ENCODE measurements at regions of chr12 and their contacts with region 1.

Region 1: DNA sequence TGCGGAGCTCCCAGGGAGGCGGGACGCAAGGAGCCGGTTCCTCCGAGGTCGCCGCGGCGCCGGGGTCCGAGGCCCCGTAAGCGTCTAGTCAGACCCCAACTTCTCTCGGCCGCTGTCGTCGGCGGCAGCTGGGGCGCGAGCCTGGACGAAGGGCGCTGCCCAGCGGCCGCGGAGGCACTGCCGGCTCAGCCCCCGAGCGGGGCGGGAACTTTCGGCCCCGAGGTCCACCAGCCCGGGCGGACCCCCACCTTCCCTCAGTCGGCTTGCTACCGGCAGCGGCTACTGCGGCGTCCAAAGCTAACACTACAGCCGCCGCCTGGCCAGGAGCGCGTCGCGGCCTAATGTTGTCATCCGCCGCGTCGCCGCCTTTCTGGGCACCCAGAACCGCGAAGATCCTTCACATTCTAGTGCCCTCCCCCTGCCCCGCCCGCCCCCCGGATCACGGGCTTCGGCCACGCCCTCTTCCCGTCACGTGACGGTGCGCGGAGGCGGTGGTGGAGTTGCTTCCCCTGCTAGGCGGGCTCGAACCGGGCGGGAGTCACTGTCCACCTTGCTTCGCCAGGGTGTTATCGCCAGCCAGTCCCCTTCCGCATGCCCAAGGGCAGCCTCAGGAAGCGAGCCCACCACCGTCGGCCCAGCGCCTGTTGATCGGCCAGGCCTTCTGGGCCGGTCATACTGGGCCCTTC is at the start of gene OSBPL8:
- DNase-seq: peak; percentile 91
- H3K4me3 Mint-ChIP-seq: peak within 1 kb of the TSS; percentile 94
- H3K27ac Mint-ChIP-seq: peak within 1 kb of the TSS; percentile 98
- H3K4me1 Mint-ChIP-seq: peaks cover 49% of the 10 kb centered on the region
- H3K27me3 Mint-ChIP-seq: no peaks in the 10 kb centered on the region
- total RNA-seq, gene OSBPL8: 86.9 and 95.9 TPM in 2 replicates

Region 2: DNA sequence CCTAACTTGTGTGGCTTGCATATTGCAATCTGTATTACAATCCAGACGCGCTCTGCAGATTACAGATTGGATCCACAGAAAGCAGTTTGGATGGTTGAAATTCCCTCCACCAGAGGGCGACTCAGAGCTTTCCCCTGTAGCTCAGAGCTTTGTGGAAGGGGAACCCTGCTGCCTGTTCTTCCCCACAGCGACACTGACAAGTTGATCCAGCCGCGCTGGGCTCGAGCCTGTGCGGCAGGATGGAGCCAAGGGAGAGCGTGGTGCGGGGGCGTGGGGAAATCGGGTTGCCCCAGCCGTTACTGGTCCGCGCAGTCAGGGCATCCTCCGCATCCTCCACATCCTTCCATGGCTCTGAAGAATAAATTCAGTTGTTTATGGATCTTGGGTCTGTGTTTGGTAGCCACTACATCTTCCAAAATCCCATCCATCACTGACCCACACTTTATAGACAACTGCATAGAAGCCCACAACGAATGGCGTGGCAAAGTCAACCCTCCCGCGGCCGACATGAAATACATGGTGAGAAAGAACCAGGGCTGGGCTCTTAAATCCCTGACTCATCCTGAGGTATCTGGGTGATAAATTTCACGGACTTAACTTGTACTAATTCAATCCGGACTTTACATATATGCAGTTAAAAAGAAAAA is 1225.0 kb before region 1 on chr12 and contains the start of gene GLIPR1L1:
- intact Hi-C with region 1: loop called (anchors 10 kb)
- DNase-seq: peak; percentile 67
- H3K4me3 Mint-ChIP-seq: peak within 1 kb of the TSS; percentile 70
- H3K27ac Mint-ChIP-seq: no peak within 1 kb of the TSS
- H3K4me1 Mint-ChIP-seq: peaks cover 36% of the 10 kb centered on the region
- H3K27me3 Mint-ChIP-seq: peaks cover 35% of the 10 kb centered on the region
- total RNA-seq, gene GLIPR1L1: not detected in 2 replicates

Region 3: GRCh38 chr12:75641031-75641780 is 918.3 kb before region 1 on chr12:
- intact Hi-C with region 1: loop called (anchors 1 kb)
- DNase-seq: peak; percentile 32
- H3K4me3 Mint-ChIP-seq: peak overlapping the region; percentile 19
- H3K27ac Mint-ChIP-seq: peak overlapping the region; percentile 89
- H3K4me1 Mint-ChIP-seq: peaks cover 34% of the 10 kb centered on the region
- H3K27me3 Mint-ChIP-seq: no peaks in the 10 kb centered on the region

Region 4: DNA sequence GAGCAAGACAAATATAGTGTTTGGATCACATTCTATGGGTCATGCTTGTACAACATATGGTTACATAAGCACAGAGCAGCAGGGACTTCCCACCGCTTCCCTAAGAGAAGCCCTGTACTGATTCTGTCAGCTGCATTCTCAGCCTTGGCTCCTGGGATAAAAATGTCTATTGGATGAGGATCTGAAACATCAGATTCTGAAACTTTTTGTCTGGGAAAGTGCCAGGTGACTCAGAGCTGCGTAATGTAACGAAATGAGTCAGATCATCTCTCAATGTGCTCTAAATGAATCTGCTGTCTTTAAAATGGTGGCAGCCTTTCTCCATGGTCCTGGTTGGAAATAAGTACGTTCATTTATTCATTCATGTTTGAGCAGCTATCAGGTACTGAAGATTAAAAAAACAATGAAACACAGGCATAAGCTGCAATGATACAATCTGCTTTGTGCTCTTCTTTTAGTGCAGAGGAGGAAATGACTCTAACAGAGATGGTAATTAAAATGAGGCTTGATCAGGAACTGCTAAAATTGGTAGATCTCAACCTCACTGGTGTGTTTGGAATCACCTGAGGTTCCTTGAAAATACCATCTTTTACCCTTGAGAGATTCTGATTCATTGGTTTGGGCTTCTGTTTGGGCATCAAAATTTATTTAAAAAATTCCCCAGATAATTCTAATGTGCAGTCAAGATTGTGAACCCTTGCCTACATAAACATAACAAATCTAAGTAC is 375.9 kb before region 1 on chr12:
- intact Hi-C with region 1: loop called (anchors 1 kb)
- DNase-seq: no peak
- H3K4me3 Mint-ChIP-seq: no peak overlapping the region
- H3K27ac Mint-ChIP-seq: no peak overlapping the region
- H3K4me1 Mint-ChIP-seq: peaks cover 14% of the 10 kb centered on the region
- H3K27me3 Mint-ChIP-seq: peaks cover 36% of the 10 kb centered on the region

Region 5: DNA sequence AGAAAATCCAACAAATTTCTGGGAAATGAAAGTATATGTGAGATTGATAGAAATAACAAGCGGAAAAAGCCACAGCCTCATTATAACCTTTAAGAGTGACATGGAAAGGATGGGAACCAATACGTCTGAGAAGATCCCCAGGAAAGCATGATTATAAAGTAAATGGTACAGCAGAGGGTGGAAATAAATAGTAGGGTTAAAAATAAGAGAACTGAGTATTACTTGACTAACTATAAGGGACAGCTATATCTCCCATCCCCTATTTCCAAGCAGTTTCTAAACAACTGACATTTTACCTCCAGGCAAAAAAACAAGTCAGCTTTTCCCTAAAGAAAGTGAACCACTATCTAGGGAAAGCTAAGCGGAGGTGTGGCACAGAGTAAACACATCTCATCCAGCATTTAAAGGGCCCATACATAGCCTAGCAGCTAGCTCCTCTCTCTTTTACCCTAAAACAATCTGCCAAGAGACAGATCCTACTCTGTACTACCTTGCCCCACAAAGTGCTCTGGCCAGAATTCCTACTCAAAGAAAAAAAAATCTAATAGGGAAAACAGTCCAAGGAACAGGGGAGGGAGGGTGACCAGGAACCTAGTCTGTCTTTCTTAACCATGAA is 11.2 kb before region 1 on chr12:
- intact Hi-C with region 1: loop called (anchors 1 kb)
- DNase-seq: no peak
- H3K4me3 Mint-ChIP-seq: no peak overlapping the region
- H3K27ac Mint-ChIP-seq: no peak overlapping the region
- H3K4me1 Mint-ChIP-seq: peaks cover 47% of the 10 kb centered on the region
- H3K27me3 Mint-ChIP-seq: no peaks in the 10 kb centered on the region

Region 6: DNA sequence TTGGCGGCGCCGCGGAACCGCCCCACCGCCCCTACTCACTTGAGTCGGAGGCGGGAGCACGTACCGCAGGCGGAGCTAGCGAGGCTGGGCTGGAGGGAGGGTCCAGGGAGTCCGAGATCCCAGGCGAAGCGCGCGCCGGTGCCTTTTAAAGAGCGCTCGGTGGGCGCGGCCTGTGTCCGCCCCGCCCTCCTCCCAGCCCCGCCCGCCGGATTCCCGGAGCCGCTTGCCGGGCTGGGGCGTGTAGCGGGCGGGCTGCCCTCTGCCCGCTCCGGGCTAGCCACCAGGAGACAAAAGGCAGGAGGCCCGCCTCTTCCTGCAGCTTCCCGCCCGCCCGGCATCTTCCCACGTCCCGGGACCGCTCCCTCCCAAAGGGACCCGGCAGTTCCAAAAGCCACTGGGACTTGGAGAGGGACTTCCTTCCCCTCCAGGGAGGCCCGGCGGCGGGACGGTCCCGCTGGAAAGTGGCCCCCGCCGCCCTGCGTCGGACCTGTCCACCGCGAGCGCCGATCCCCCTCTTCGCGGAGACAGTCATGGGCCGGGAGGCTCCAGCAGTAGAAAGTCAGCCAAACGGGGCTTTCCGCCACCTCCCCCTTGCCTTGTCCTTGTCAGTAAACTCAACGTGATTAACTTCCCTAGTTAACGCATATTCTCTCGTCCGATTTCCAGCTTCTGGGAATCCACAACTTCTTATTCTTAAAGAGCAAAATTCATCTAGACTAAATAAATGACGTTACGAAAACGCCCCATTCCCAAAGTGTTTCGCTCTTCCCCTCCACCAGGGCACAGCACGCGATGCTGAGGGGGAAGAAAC is 319.6 kb after region 1 on chr12 and contains the start of gene CSRP2:
- intact Hi-C with region 1: no loop called
- DNase-seq: peak; percentile 57
- H3K4me3 Mint-ChIP-seq: peak within 1 kb of the TSS; percentile 91
- H3K27ac Mint-ChIP-seq: peak within 1 kb of the TSS; percentile 27
- H3K4me1 Mint-ChIP-seq: peaks cover 15% of the 10 kb centered on the region
- H3K27me3 Mint-ChIP-seq: peaks cover 58% of the 10 kb centered on the region
- total RNA-seq, gene CSRP2: 0.36 and 0.96 TPM in 2 replicates

Region 7: DNA sequence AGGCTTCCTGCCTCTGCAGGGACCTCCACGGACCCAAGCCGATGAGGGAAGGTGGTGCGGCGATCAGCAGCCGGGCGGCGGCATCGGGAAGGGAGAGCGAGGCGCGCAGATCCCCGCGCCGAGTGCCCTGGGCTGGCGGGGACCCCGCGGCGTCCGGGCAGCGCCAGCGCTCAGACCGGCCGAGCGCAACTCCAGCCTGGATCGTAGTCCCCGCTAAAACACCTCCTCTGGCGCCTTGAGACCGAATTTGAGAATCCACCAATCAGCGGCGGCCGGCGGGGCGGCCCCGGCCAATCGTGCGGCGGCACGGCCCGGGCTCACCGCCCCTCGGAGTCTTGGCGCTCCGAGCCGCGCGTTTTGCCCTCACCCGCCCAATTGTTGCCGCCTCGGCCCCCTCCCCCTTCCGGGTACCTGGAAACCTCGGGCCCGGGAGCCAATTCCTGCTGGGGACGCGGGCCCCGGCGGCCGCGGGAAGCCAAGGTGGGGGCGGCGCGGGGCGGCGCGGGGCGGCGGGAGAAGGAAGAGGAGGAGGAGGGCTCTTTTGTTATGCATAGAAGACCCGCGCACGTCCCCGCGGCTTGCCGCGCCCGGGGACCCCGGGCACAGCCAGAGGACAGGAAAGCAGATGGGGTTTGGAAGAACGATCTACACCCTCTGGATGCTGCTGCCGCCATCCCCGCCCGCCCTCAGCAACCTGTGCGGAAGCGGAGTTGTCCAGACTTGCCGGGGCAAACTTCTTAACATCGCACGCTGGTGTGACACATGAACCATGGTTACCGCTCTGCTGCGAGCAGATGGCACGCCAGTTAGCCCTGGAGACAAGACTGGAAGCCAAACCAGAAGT is 506.0 kb after region 1 on chr12 and contains the start of gene E2F7:
- intact Hi-C with region 1: loop called (anchors 2 kb)
- DNase-seq: peak; percentile 87
- H3K4me3 Mint-ChIP-seq: peak within 1 kb of the TSS; percentile 94
- H3K27ac Mint-ChIP-seq: peak within 1 kb of the TSS; percentile 73
- H3K4me1 Mint-ChIP-seq: peaks cover 42% of the 10 kb centered on the region
- H3K27me3 Mint-ChIP-seq: peaks cover 12% of the 10 kb centered on the region
- total RNA-seq, gene E2F7: 16.6 and 16.9 TPM in 2 replicates